GM10248 (cell line): ENCODE measurements at regions of chr6 and their contacts with region 1.

Region 1: GRCh38 chr6:47631269-47631772 is 67.1 kb upstream of the ADGRF4 start:
- DNase-seq: peak; percentile 37
- CTCF ChIP-seq: peak; percentile 27

Region 2: GRCh38 chr6:47485491-47486135 is 145.7 kb before region 1 on chr6:
- CTCF ChIA-PET with region 1: no interaction called
- POLR2A ChIA-PET with region 1: no interaction called
- DNase-seq: no peak
- CTCF ChIP-seq: no peak

Region 3: DNA sequence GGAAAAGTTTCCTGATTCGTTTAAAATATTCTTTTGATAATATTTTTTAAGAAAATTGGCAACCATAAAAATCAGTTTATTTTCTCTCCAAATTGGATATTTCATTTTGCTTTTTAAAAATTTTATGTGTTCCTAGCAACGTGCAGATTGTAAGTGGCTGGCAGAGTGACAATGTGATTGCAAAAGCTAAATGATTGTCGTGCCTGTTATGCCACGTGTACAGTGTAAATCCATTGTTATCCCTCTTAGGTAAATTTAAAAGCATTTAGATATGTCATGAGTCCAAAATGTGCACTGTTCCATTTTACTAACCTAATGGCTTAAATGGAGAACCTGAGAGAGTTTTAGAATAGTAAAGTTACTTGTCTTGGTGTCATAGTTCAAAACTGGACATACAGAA is 27.3 kb before region 1 on chr6:
- CTCF ChIA-PET with region 1: interaction called, 14 read pairs
- POLR2A ChIA-PET with region 1: no interaction called
- DNase-seq: no peak
- CTCF ChIP-seq: no peak

Region 4: GRCh38 chr6:47729019-47729418 is 97.7 kb after region 1 on chr6:
- CTCF ChIA-PET with region 1: interaction called, 125 read pairs
- POLR2A ChIA-PET with region 1: no interaction called
- DNase-seq: no peak
- CTCF ChIP-seq: no peak

Region 5: DNA sequence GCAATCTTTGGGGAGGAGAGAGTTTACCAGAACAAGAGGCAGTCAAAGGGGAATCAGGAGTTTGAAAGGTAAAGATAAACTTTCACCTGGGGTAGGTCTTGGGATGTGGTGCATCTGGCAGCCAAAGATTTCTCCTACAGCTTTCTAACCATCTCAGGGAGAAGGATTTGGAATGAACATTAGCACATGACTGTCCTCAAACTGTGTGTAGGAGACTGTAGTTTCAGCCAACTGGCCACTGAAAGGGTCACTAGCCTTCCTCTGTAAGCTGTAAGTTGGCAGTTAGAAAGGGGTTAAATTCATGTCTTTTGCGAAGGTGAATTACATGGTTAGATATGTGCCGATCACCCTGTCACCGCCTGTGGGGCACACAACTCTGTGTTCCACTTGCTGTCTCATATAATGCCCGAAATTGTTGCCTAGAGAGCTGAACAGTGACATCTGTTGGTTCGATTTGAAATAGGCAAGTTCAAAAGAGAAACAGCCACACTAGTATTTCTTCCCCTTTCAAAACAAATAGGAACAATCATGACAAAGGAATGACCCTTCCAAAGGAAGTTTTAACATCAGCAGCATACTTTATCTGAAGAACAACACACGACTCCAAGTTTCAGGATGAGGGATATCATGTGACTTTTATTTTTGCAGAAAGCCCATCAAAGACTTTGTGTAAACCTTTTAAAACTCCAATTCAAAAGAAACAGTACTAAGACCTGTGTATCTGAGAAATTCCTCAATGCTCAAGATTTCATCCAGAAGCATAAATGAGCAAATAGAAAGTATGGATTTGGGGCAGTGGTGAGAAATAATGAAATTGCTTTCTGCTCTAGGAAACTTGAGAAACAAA is 149.4 kb after region 1 on chr6:
- CTCF ChIA-PET with region 1: interaction called, 106 read pairs
- POLR2A ChIA-PET with region 1: no interaction called
- DNase-seq: peak; percentile 44
- CTCF ChIP-seq: peak; percentile 57